Activated CD4-positive, alpha-beta memory T cell treated with anti-CD3 and anti-CD28 coated beads, Interleukin-2, amount 10 ng/mL, durations not matched to agents 7 days and 5 days (primary cell): ENCODE measurements at regions of chr1 and their contacts with region 1.

Region 1: DNA sequence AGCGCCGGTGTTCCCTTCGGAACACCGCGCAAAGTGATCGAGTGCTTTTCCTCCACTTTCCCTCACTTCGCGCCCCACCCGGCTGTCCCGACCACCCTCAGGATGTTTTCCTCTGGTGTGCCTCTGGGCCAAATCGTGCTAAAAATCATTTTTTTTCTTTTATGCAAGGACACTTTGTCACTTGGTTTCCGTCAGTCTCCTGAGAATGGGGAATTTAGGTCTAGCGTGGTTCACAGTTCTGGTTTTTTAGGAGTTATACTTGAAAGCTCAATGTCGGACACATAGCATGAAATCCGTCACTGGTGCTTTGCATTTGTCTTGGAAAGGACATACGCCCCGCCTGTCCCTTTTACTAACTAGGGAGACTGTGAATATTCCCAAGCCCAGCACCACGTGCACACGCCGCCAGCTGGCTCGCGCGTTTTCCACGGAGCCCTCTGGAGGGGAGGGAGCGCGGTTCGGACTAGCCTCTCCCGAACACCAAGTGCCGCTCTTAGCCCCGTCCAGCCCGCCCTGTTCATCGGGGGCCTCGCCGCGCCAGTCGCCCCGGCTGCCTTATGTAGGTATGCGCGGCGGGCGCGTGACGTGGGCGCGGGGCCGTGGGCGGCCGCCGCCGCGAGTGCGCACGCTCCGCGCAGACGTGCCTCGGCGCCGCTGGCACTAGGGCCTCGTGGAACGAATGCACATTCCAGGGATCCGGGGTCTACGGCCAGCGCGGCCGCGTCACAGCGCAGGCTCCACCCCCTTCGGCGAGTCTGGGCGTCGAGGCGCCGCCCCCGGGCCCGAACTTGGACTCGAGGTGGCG is 572 bp upstream of the IRF2BP2 start:
- DNase-seq: peak; percentile 90
- H3K4me3 Mint-ChIP-seq: peak overlapping the region; percentile 82
- H3K27ac Mint-ChIP-seq: peak overlapping the region; percentile 95
- H3K4me1 Mint-ChIP-seq: peaks cover 44% of the 10 kb centered on the region
- H3K27me3 Mint-ChIP-seq: no peaks in the 10 kb centered on the region

Region 2: DNA sequence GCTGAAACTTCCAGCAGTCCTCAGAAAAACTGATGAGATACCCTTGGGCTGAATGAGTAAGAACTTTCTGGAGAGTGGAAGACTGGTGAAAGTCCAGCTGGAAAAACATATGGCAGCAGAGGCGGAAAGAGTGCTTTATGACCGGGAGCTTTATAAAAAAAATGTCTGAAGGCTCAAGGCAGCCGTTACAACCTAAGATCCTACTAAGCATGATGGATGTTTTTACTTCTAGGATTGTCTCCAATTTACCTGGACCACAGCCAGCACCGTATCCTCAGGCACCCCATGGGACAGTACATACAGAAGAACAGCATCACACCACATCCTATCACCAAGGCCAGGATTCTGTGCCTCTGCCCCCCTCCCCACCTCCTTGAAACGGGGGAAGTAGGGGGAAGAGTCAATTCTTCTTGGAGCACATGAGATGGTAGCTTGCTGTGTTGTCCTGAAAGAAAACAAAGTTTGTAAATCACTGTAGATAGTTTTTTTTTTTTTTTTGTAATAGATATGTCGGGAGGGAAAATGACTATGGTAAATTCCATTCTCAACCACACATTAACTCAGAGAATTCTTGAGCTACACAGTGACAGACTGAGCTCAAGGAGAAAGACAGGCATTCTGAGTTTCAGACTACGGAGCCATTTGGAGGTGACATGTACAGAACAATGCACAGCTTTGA is 11.2 kb after region 1 on chr1:
- CTCF ChIA-PET with region 1: no interaction called
- POLR2A ChIA-PET with region 1: interaction called, 15 read pairs
- DNase-seq: no peak
- H3K4me3 Mint-ChIP-seq: no peak overlapping the region
- H3K27ac Mint-ChIP-seq: no peak overlapping the region
- H3K4me1 Mint-ChIP-seq: peaks cover 7% of the 10 kb centered on the region
- H3K27me3 Mint-ChIP-seq: no peaks in the 10 kb centered on the region

Region 3: DNA sequence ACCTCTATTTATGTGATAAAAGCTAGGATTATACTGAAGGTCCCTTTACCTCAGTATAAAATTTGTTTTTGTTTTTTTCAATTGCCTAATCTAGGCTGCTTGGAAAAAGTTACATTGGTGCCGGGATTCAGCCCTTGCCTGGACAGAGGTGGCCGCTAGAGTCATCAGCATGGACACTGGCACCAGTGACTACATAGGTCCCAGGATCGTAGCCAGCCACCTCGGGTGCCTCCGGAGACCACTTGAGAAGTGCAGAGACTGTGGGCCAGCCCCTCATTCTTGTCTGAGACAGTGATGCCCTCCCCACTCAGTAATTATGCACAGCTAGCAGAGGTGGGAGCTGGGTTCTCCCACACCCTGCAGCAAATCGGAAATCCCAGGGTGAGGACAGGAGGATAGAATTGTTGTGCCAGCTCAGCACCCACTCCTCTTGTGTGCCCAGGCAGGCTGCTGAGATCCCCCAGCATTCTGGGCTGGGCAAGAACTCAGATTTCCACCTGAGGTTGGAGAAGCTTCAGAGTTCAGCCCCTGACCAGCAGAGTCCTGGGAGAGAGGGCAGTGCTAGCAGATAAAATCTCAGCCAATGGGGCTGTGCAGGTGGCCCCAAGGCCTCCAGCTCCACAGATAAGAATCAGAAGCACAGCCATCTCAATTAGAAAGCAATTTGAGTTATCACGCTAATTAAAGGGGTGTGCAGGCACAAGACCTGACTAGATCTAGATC is 44.7 kb after region 1 on chr1:
- CTCF ChIA-PET with region 1: no interaction called
- POLR2A ChIA-PET with region 1: no interaction called
- DNase-seq: no peak
- H3K4me3 Mint-ChIP-seq: no peak overlapping the region
- H3K27ac Mint-ChIP-seq: no peak overlapping the region
- H3K4me1 Mint-ChIP-seq: peaks cover 5% of the 10 kb centered on the region
- H3K27me3 Mint-ChIP-seq: no peaks in the 10 kb centered on the region

Region 4: DNA sequence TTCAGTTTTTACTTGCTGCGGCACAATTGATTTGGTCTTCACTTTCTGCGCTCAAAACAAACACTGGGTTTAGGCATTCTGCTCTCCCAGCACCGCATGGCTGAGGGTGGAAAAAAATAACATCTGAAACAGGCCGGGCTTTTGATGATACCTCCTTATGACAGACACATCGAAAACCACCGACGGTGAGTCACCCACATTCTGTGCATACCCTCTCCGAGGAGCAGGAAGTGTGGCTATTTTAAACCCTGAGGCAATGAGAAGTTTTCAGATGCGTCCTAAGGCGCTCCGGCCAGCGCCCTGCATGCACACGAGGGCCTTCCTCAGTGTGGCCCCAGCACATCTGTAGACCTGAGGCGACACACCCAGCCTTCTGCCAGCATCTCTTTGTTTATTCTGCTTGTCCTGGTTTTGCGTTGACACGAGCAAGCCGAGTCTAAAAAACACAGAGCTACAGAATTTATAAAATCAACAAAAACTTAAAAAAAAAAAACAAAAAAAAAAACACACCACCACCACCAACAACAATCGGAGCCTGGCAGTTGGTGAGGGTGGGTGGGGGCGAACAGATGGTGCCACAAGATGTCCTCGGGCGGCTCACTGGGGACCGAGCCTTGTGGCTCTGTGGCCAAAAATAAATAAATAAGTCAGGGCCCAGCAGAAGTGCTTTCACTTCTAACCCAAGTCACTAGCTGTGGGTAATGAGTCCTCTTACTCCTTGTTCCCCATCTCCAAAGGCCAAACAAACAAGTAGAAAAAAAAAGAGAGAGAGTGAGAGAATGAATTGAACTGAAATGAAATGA is 162.0 kb after region 1 on chr1:
- CTCF ChIA-PET with region 1: interaction called, 3 read pairs
- POLR2A ChIA-PET with region 1: interaction called, 14 read pairs
- DNase-seq: peak; percentile 91
- H3K4me3 Mint-ChIP-seq: peak overlapping the region; percentile 31
- H3K27ac Mint-ChIP-seq: peak overlapping the region; percentile 95
- H3K4me1 Mint-ChIP-seq: peaks cover 55% of the 10 kb centered on the region
- H3K27me3 Mint-ChIP-seq: no peaks in the 10 kb centered on the region

Region 5: GRCh38 chr1:234955107-234955731 is 344.7 kb after region 1 on chr1:
- CTCF ChIA-PET with region 1: interaction called, 3 read pairs
- POLR2A ChIA-PET with region 1: interaction called, 10 read pairs
- DNase-seq: no peak
- H3K4me3 Mint-ChIP-seq: no peak overlapping the region
- H3K27ac Mint-ChIP-seq: peak overlapping the region; percentile 73
- H3K4me1 Mint-ChIP-seq: peaks cover 46% of the 10 kb centered on the region
- H3K27me3 Mint-ChIP-seq: no peaks in the 10 kb centered on the region

Region 6: GRCh38 chr1:235011599-235012435 is 401.3 kb after region 1 on chr1:
- CTCF ChIA-PET with region 1: interaction called, 6 read pairs
- POLR2A ChIA-PET with region 1: interaction called, 50 read pairs
- DNase-seq: peak; percentile 98
- H3K4me3 Mint-ChIP-seq: peak overlapping the region; percentile 57
- H3K27ac Mint-ChIP-seq: peak overlapping the region; percentile 94
- H3K4me1 Mint-ChIP-seq: peaks cover 78% of the 10 kb centered on the region
- H3K27me3 Mint-ChIP-seq: peaks cover 11% of the 10 kb centered on the region